Ovary (tissue), 10 donors: ENCODE measurements at regions of chr9 and their contacts with region 1.

Region 1: DNA sequence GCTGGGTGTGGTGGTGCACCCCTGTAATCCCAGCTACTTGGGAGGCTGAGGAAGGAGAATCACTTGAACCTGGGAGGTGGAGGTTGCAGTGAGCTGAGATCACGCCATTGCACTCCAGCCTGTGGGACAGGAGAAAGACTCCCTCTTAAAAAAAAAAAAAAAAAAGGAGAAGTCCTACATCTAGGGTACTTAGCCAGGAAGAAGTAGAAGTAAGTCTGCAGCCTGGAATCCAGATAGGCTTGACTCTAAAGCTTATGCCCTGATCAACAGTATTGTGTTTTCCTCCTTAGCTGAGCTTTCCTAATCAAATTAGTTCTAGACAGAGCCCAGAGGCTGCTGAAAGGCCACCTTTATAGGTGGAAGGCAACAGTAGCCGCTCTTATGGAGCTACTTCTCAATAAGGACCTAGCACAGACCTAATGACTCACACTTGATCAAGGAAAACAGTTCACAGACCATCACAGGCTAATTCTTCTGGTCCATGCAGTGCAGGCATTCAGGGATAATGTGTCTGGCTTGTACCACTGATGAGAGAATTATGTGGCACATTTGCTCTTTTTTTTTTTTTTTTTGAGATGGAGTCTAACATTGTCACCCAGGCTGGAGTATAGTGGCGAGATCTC is 105.5 kb upstream of the KLF4 start:
- DNase-seq: no peak
- H3K4me3 ChIP-seq: no peak overlapping the region
- H3K27ac ChIP-seq: no peak overlapping the region
- H3K4me1 ChIP-seq: peaks cover 1% of the 10 kb centered on the region
- H3K27me3 ChIP-seq: no peaks in the 10 kb centered on the region
- CTCF ChIP-seq: no peak
- EP300 ChIP-seq: no peak
- POLR2A ChIP-seq: no peak

Region 2: GRCh38 chr9:107530679-107531078 is 64.3 kb before region 1 on chr9:
- intact Hi-C with region 1: no loop called
- DNase-seq: no peak
- H3K4me3 ChIP-seq: no peak overlapping the region
- H3K27ac ChIP-seq: no peak overlapping the region
- H3K4me1 ChIP-seq: peaks cover 3% of the 10 kb centered on the region
- H3K27me3 ChIP-seq: no peaks in the 10 kb centered on the region
- CTCF ChIP-seq: no peak
- EP300 ChIP-seq: no peak
- POLR2A ChIP-seq: no peak

Region 3: GRCh38 chr9:107547303-107548047 is 47.5 kb before region 1 on chr9:
- intact Hi-C with region 1: loop called in 1 of 4 experiments (anchors 2 kb)
- DNase-seq: peak in 1 of 5 donors; percentile 25
- H3K4me3 ChIP-seq: no peak overlapping the region
- H3K27ac ChIP-seq: no peak overlapping the region
- H3K4me1 ChIP-seq: peaks cover 8% of the 10 kb centered on the region
- H3K27me3 ChIP-seq: no peaks in the 10 kb centered on the region
- CTCF ChIP-seq: no peak
- EP300 ChIP-seq: no peak
- POLR2A ChIP-seq: no peak

Region 4: DNA sequence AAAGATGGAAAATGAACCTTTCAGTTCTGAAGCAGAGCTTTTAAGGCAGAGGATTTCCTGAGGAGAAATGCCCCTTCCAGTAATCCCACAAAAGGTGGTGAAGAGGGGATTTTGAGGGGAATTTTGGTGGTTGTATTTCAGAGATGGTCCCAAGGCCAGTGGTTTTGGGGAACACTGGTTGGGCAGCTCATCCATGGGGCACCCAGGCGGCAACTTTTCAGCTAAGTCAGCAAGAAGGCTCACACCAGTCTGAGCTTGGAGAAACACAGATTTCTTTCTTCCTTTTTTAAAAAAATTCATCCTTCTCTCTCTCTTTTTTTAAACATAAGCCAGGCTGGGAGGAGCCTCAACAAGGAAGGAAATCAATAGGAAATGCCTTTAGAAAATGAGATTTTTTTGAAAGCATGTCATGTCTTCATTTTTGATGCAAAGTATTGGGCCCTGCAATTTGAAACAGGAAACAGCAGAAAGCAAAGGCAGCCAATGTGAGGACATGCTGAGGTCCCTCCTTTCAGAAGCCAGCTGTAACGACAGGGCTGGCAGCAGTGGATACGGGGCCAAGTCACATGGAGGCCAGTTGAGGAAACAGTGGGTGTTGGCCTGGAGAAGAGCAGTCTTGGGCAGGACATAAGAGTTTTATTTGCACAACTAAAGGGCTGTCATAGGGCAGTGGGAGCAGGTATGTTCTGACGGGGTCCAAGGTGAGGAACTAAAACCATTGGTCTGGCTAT is 49.9 kb after region 1 on chr9:
- intact Hi-C with region 1: loop called in 1 of 4 experiments (anchors 5 kb)
- DNase-seq: no peak
- H3K4me3 ChIP-seq: no peak overlapping the region
- H3K27ac ChIP-seq: no peak overlapping the region
- H3K4me1 ChIP-seq: no peaks in the 10 kb centered on the region
- H3K27me3 ChIP-seq: no peaks in the 10 kb centered on the region
- CTCF ChIP-seq: no peak
- EP300 ChIP-seq: no peak
- POLR2A ChIP-seq: no peak